ENCODE measurements at regions of chr19 and their contacts with region 1.

Region 1: GRCh38 chr19:39328046-39328705 is 7.5 kb upstream of the LRFN1 start:
- DNase-seq: peak; percentile 82 to 94 (median 93)
- ATAC-seq: peak; percentile 73 to 77
- H3K4me3 ChIP-seq: no peak overlapping the region
- H3K27ac ChIP-seq: no peak overlapping the region
- H3K4me1 ChIP-seq: no peaks in the 10 kb centered on the region
- H3K27me3 ChIP-seq: no peaks in the 10 kb centered on the region

Region 2: DNA sequence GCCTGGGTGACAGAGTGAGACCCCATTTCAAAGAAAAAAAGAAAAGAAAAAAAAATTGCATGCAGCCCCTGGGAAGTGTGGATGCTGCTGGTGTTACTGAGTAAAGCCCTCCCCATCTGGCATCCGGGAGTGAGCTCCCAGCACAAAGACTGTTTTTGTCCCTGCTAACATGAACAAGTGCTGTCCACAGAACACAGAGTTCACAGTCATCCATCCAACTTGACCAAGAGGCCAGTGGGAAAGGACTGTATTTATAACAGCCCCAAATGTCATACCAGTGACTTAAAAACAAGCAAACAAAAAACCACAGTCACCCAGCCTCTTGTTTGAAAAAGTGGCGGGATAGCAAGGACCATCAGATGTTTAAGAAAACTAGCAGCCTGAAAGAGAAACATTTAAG is 363.4 kb before region 1 on chr19:
- intact Hi-C with region 1: loop called in 1 of 4 experiments (anchors 5 kb)
- DNase-seq: no peak
- ATAC-seq: no peak
- H3K4me3 ChIP-seq: no peak overlapping the region
- H3K27ac ChIP-seq: no peak overlapping the region
- H3K4me1 ChIP-seq: no peaks in the 10 kb centered on the region
- H3K27me3 ChIP-seq: no peaks in the 10 kb centered on the region

Region 3: DNA sequence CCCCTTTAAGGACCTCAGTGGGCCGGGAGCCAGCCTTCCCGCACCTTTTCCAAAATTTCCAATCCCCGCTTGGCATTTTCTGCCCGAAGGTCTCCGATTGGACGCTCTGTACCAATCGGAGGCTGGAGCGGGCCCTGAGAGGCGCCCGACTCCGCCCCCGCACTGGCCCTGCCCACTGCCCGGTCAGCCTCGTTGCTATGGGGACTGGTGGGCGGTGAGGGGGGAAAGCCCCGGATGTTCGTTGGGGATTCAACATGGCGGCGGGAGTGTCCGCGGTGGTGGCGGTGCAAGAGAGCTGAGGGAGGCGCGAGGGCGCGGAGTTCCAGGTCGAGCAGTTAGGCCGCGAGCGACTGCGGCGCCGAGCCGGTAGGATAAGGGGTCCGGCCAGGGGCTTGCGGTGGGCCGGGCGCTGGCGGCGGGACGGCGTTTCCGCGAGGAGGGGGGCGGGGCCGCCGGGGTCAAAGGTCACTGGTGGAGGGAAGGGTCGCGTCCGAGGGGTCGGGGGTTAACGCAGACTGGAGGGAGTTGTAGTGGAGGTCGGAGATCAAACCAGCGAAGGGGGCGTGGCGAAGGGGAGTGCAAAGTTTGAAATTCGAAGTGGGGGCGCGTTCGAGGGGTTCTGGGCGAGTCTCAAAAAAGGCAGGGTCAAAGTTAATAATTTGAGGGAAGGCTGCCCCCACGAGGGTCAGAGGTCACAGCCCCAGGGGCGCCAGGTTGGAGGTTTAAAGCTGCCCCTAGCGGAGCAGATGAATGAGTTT is 202.4 kb before region 1 on chr19 and contains the start of gene PAK4:
- intact Hi-C with region 1: loop called (anchors 2 to 5 kb)
- DNase-seq: peak; percentile 98 to 99 (median 99)
- ATAC-seq: peak; percentile 99
- H3K4me3 ChIP-seq: peak within 1 kb of the TSS; percentile 74
- H3K27ac ChIP-seq: peak within 1 kb of the TSS; percentile 55
- H3K4me1 ChIP-seq: no peaks in the 10 kb centered on the region
- H3K27me3 ChIP-seq: no peaks in the 10 kb centered on the region
- total RNA-seq, gene PAK4: 19.9 to 24.4 (median 21.7) TPM

Region 4: DNA sequence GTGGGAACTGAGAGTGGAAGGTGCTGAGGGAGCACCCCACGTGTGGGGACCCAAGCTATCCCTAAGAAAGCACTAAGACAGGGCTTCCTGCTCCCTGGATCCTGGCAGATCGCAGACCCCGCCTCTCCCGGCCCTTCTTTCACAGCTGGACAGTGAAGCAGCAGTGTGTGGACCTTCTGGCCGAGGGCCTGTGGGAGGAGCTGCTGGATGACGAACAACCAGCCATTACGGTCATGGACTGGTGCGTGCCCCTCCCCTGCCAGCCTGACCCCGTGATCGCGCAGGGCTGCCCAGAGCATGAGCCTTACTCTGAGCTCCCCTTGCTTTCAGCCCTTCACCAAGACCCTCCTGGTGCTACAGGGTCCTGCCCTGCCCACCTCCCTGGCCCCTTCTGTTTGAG is 129.2 kb before region 1 on chr19:
- intact Hi-C with region 1: loop called in 1 of 4 experiments (anchors 10 kb)
- DNase-seq: peak; percentile 68 to 84 (median 77)
- ATAC-seq: peak; percentile 66 to 75
- H3K4me3 ChIP-seq: no peak overlapping the region
- H3K27ac ChIP-seq: no peak overlapping the region
- H3K4me1 ChIP-seq: no peaks in the 10 kb centered on the region
- H3K27me3 ChIP-seq: no peaks in the 10 kb centered on the region